ENCODE measurements at regions of chr14 and their contacts with region 1.

Region 1: DNA sequence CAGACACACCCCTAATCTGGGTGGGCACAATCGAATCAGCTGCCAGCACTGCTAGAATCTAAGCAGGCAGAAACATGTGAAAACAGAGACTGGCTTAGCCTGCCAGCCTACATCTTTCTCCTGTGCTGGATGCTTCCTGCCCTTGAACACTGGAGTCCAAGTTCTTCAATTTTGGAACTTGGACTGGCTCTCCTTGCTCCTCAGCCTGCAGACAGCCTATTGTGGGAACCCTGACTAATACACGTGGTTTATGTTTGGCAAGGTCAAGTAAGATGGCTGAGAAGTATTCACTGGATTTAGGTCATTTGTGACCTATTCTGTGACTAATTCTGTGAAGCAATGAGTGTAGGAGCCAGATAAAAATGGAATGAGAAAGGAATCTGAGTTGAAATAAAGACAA is 11.0 kb downstream of the GPR135 start:
- DNase-seq: peak; percentile 64
- H3K4me3 Mint-ChIP-seq: no peak overlapping the region
- H3K27ac Mint-ChIP-seq: no peak overlapping the region
- H3K4me1 Mint-ChIP-seq: no peaks in the 10 kb centered on the region
- H3K27me3 Mint-ChIP-seq: no peaks in the 10 kb centered on the region
- CTCF ChIP-seq: no peak

Region 2: DNA sequence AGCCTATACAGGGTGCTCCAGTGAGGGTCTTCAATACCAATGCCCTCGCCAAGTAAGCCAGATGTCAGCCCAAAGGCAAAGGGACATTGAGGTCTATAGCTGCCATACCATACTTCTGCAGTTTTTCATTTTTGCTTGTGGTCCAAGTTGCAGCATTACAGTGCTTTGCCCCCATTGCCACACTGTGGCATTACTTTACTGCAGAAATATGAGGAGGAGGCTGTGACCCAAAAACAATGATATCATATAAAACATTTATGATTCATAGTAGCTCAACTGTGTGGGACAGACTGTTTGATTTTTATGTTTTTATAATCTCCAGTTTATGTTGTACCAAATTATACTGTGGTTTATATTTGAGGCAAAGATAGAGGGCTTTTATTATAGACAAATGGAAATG is 962.5 kb before region 1 on chr14:
- CTCF ChIA-PET with region 1: no interaction called
- POLR2A ChIA-PET with region 1: no interaction called
- intact Hi-C with region 1: loop called (anchors 10 kb)
- DNase-seq: no peak
- H3K4me3 Mint-ChIP-seq: no peak overlapping the region
- H3K27ac Mint-ChIP-seq: no peak overlapping the region
- H3K4me1 Mint-ChIP-seq: no peaks in the 10 kb centered on the region
- H3K27me3 Mint-ChIP-seq: no peaks in the 10 kb centered on the region
- CTCF ChIP-seq: no peak